A673 (cell line): ENCODE measurements at regions of chr6 and their contacts with region 1.

Region 1: GRCh38 chr6:52284460-52285176 is at the start of gene MCM3:
- DNase-seq: peak; percentile 100
- H3K4me3 ChIP-seq: peak within 1 kb of the TSS; percentile 75
- H3K27ac ChIP-seq: peak within 1 kb of the TSS; percentile 87
- H3K4me1 ChIP-seq: peaks cover 30% of the 10 kb centered on the region
- H3K27me3 ChIP-seq: no peaks in the 10 kb centered on the region
- CTCF ChIP-seq: no peak
- total RNA-seq, gene MCM3: 233 and 240 TPM in 2 replicates

Region 2: DNA sequence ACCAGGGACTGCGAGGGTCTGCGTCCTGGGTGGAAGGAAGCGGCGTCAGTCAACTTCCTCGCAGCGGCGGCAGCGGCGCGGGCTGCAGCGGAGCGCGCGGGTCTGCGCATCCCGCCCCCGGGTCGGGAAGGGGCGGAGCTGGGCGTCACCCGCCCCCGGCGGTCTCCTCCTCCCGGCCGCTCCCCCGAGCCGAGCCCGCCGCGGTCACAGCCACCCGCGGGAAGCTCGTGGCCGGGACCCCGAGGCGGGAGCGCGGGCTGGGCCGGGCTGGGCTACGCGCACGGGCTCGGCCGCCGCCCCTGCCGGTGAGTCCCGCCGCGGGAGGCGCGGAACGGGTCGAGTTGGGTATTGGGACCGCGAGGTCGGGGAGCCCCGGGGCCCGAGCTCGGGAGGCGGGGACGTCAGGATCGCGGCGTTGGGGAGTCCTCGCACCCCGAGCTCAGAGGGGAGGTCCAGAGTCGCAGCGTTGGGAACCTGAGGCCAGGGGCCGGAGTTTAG is 77.4 kb after region 1 on chr6 and contains the start of gene PAQR8:
- CTCF ChIA-PET with region 1: no interaction called
- POLR2A ChIA-PET with region 1: no interaction called
- intact Hi-C with region 1: loop called (anchors 2 kb)
- DNase-seq: peak; percentile 76
- H3K4me3 ChIP-seq: peak within 1 kb of the TSS; percentile 63
- H3K27ac ChIP-seq: peak within 1 kb of the TSS; percentile 50
- H3K4me1 ChIP-seq: peaks cover 11% of the 10 kb centered on the region
- H3K27me3 ChIP-seq: no peaks in the 10 kb centered on the region
- CTCF ChIP-seq: no peak
- total RNA-seq, gene PAQR8: 1.5 and 3.8 TPM in 2 replicates

Region 3: GRCh38 chr6:52399511-52400312 is 115.1 kb after region 1 on chr6:
- CTCF ChIA-PET with region 1: interaction called, 6 read pairs
- POLR2A ChIA-PET with region 1: no interaction called
- intact Hi-C with region 1: loop called (anchors 2 kb)
- DNase-seq: peak; percentile 58
- H3K4me3 ChIP-seq: no peak overlapping the region
- H3K27ac ChIP-seq: no peak overlapping the region
- H3K4me1 ChIP-seq: no peaks in the 10 kb centered on the region
- H3K27me3 ChIP-seq: no peaks in the 10 kb centered on the region
- CTCF ChIP-seq: peak; percentile 87

Region 4: DNA sequence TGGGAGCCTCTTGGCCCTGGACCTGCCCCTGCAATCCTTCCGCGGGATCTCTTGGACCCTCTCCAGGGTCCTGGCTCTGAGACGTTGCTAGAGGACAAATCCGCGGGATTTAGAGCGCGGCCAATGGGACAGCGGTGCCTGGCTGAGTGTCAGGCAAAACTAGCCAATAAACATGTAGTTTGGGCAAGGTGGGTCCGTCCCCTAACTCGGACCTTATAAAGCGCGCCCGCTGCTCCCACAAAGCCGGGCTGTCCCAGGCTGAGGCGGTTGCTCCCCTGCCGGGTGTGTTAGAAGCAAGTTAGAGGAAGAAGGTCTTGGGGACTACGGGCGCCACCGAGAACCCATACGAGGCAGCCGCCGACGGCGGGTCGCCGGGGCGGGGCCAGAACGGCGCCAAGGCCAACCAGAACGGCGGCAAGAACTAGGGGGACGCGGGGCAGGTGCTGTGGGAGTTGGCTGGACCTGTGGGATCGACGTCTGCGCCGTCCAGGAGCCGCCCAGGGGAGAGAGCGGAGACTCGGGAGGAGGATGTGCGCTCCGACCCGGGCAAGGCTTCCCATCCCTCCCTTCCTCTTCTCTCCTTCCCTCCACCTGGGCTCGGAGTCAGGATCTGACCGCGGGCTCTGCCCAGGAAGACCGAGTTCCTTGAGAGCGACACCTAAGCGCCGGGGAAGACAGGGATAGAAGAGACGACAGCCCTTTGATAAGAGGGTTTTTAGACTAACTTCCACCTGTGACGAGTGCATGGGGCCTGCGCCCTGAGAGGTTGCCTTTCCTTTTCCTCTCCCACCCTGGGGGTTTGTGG is 379.8 kb after region 1 on chr6:
- CTCF ChIA-PET with region 1: no interaction called
- POLR2A ChIA-PET with region 1: no interaction called
- intact Hi-C with region 1: loop called (anchors 2 kb)
- DNase-seq: peak; percentile 97
- H3K4me3 ChIP-seq: peak overlapping the region; percentile 64
- H3K27ac ChIP-seq: peak overlapping the region; percentile 54
- H3K4me1 ChIP-seq: peaks cover 26% of the 10 kb centered on the region
- H3K27me3 ChIP-seq: no peaks in the 10 kb centered on the region
- CTCF ChIP-seq: no peak